ENCODE measurements at regions of chr3 and their contacts with region 1.

Region 1: GRCh38 chr3:126961191-126961790 is 21.6 kb upstream of the PLXNA1 start:
- DNase-seq: peak; percentile 41 to 68
- H3K4me3 ChIP-seq: no peak overlapping the region
- H3K27ac ChIP-seq: peak overlapping the region; percentile 35
- H3K4me1 ChIP-seq: peaks cover 49% of the 10 kb centered on the region
- H3K27me3 ChIP-seq: no peaks in the 10 kb centered on the region
- CTCF ChIP-seq: no peak

Region 2: DNA sequence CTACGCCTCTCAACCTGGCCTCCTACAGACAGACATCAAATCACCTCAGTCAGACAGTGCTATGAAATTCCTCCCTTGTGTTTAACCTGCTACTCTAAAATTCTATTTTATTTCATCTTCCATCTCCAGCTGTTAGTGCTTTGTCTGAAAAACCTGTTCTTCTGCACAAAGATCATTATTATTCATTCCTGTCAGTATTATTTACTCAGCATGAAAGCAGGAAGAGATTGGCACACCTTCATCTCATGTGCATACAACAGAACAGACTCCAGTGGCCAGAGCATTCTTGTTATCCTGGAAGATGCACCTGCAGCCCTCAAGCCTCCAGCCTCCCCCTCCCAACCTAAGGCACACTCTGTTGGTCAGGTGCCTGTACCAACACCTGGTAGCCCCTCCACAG is 994.2 kb before region 1 on chr3:
- CTCF ChIA-PET with region 1: no interaction called
- POLR2A ChIA-PET with region 1: no interaction called
- intact Hi-C with region 1: no loop called
- DNase-seq: peak; percentile 19 to 80
- H3K4me3 ChIP-seq: no peak overlapping the region
- H3K27ac ChIP-seq: no peak overlapping the region
- H3K4me1 ChIP-seq: peaks cover 19% of the 10 kb centered on the region
- H3K27me3 ChIP-seq: peaks cover 4% of the 10 kb centered on the region; the same call in 1 of the 2 replicates
- CTCF ChIP-seq: no peak

Region 3: DNA sequence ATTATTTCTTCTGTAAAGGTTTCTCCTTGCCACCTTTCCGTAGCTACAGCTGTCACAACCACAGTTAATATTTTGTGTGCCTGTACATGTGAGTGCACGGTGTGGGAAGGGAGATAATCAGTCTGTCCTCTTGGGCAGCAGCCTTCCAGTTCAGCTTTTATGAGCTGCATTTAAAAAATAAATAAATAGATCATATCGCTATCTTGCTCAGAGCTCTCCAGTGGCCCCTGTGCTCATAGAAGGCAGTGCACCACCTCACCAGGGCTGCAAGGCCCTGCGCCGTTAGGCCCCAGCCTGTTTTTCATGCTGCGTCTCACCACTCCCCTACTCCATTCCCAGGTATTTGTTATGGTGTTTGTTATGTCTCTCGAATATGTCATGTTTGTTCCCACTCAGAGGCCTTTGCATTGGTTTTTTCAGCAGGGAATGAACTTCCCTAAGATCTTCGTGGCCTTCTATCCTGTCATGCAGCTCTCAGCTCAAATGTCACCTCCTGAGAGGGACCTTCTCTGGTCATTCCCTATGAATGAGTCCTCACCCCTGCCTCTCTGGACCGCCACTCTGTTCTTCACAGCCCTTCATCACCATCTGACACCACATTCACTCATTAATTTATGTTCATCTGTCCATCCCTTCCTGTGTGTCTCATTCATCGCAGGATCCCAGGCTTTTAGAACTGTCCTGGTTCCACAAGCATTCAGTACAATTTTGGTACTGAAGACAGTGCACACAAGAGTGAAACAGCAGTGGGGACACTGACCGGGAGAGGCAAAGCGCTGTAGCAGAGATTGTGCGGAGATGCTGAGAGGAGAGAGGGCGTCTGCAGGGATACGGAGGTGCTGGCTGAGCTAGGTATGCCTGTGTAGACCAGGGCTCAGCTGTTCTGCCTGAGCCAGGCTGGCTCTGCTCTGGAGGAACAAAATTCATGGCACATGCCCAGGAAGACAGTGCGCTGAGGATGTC is 125.1 kb before region 1 on chr3:
- CTCF ChIA-PET with region 1: interaction called, 3 read pairs
- POLR2A ChIA-PET with region 1: no interaction called
- intact Hi-C with region 1: loop called (anchors 2 kb)
- DNase-seq: peak in 1 of 2 experiments; percentile 18
- H3K4me3 ChIP-seq: no peak overlapping the region; the same call in 1 of the 2 replicates
- H3K27ac ChIP-seq: peak overlapping the region; percentile 62
- H3K4me1 ChIP-seq: peaks cover 23% of the 10 kb centered on the region
- H3K27me3 ChIP-seq: no peaks in the 10 kb centered on the region
- CTCF ChIP-seq: no peak; the same call in 1 of the 2 replicates

Region 4: GRCh38 chr3:126858887-126859286 is 102.4 kb before region 1 on chr3:
- CTCF ChIA-PET with region 1: no interaction called
- POLR2A ChIA-PET with region 1: no interaction called
- intact Hi-C with region 1: loop called (anchors 5 kb)
- DNase-seq: peak; percentile 69 to 94
- H3K4me3 ChIP-seq: no peak overlapping the region
- H3K27ac ChIP-seq: peak overlapping the region; percentile 66
- H3K4me1 ChIP-seq: peaks cover 30% of the 10 kb centered on the region
- H3K27me3 ChIP-seq: no peaks in the 10 kb centered on the region
- CTCF ChIP-seq: no peak